Naive thymus-derived CD4-positive, alpha-beta T cell (primary cell): ENCODE measurements at regions of chr4 and their contacts with region 1.

Region 1: DNA sequence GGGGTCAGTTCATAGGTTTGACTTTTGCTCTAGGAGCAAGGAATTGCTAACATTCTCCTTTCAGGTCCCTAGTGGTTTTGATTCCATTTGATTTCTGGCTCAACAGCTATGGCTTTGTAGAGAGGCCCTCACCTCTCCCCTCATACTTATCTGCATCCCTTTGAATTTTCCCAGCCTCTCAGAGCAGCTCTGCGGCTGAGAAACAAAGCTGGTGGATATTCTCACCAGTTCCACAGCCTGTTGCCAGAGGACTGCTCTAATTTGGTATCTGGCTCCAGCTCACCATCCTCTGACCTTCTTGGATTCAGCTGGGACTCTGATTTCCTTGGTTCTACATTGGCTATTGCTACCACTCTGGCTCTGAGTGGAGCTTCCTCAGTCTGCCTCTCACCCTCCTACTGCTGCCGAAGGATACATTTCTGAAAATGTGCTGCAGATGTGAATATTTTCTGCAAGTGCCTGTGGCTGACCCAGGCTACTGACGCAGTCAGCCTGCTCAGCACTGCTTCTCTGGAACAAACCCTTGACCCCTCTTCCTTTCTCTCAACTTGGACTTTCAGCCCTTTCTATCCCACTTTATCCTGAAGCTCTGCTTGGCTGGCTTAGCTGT is 110.9 kb upstream of the ENPEP start:
- DNase-seq: no peak
- ATAC-seq: no peak
- H3K4me3 ChIP-seq: no peak overlapping the region
- H3K4me3 Mint-ChIP-seq: no peak overlapping the region
- H3K27ac ChIP-seq: no peak overlapping the region
- H3K27ac Mint-ChIP-seq: no peak overlapping the region
- H3K4me1 ChIP-seq: no peaks in the 10 kb centered on the region
- H3K4me1 Mint-ChIP-seq: peaks cover 0 to 5% (median 0%) of the 10 kb centered on the region in 7 donors
- H3K27me3 ChIP-seq: no peaks in the 10 kb centered on the region
- H3K27me3 Mint-ChIP-seq: peaks cover 14 to 29% (median 25%) of the 10 kb centered on the region in 5 donors

Region 2: GRCh38 chr4:108527723-108528122 is 1837.3 kb before region 1 on chr4:
- CTCF ChIA-PET with region 1: no interaction called
- POLR2A ChIA-PET with region 1: no interaction called
- intact Hi-C with region 1: no loop called
- DNase-seq: peak in 7 of 9 donors; percentile 41 to 61 (median 48)
- ATAC-seq: peak; percentile 59
- H3K4me3 ChIP-seq: peak overlapping the region; percentile 31
- H3K4me3 Mint-ChIP-seq: peak overlapping the region; percentile 16 to 81 (median 66)
- H3K27ac ChIP-seq: peak overlapping the region; percentile 54
- H3K27ac Mint-ChIP-seq: peak overlapping the region; percentile 12 to 89 (median 82)
- H3K4me1 ChIP-seq: peaks cover 20 to 61% of the 10 kb centered on the region in 2 donors
- H3K4me1 Mint-ChIP-seq: peaks cover 36 to 88% (median 82%) of the 10 kb centered on the region in 7 donors
- H3K27me3 ChIP-seq: no peaks in the 10 kb centered on the region
- H3K27me3 Mint-ChIP-seq: no peaks in the 10 kb centered on the region

Region 3: GRCh38 chr4:108662629-108663028 is 1702.4 kb before region 1 on chr4:
- CTCF ChIA-PET with region 1: no interaction called
- POLR2A ChIA-PET with region 1: no interaction called
- intact Hi-C with region 1: no loop called
- DNase-seq: no peak
- ATAC-seq: no peak
- H3K4me3 ChIP-seq: no peak overlapping the region
- H3K4me3 Mint-ChIP-seq: no peak overlapping the region
- H3K27ac ChIP-seq: no peak overlapping the region
- H3K27ac Mint-ChIP-seq: peak overlapping the region in 1 of 9 donors; percentile 41
- H3K4me1 ChIP-seq: no peaks in the 10 kb centered on the region
- H3K4me1 Mint-ChIP-seq: peaks cover 0 to 16% (median 5%) of the 10 kb centered on the region in 7 donors
- H3K27me3 ChIP-seq: no peaks in the 10 kb centered on the region
- H3K27me3 Mint-ChIP-seq: no peaks in the 10 kb centered on the region

Region 4: DNA sequence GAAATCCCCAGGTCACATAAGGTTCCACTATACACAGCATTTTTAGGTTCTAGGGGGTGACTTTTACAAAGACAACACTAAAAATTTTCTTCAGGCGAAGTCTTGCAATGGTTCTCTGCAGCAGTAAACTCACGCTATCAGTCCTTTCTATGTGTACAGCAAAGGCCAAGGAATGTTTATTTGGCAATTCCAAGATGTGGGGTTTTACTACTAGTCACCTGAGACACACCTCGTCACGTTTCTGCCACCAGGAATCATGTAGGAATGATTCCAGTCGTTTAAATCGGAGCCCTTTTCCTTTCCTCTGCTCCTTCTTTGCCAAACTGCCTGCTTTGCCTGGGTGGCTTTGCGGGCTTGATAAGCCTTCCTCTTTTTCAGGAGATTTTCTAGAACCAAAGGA is 35.1 kb after region 1 on chr4:
- CTCF ChIA-PET with region 1: no interaction called
- POLR2A ChIA-PET with region 1: no interaction called
- intact Hi-C with region 1: loop called in 1 of 2 experiments (anchors 2 kb)
- DNase-seq: no peak
- ATAC-seq: no peak
- H3K4me3 ChIP-seq: no peak overlapping the region
- H3K4me3 Mint-ChIP-seq: no peak overlapping the region
- H3K27ac ChIP-seq: no peak overlapping the region
- H3K27ac Mint-ChIP-seq: no peak overlapping the region
- H3K4me1 ChIP-seq: no peaks in the 10 kb centered on the region
- H3K4me1 Mint-ChIP-seq: no peaks in the 10 kb centered on the region
- H3K27me3 ChIP-seq: no peaks in the 10 kb centered on the region
- H3K27me3 Mint-ChIP-seq: peaks cover 3 to 20% (median 8%) of the 10 kb centered on the region in 5 donors